H1 (cell line): ENCODE measurements at regions of chr16 and their contacts with region 1.

Region 1: GRCh38 chr16:4957720-4958509 is at the start of gene SEC14L5:
- DNase-seq: peak; percentile 99 to 100
- H3K4me3 ChIP-seq: peak within 1 kb of the TSS; percentile 42 to 76 (median 61)
- H3K27ac ChIP-seq: no peak within 1 kb of the TSS
- H3K4me1 ChIP-seq: peaks cover 0 to 10% (median 9%) of the 10 kb centered on the region in 4 experiments; a peak in 6 of 7 replicates
- H3K27me3 ChIP-seq: no peaks in the 10 kb centered on the region; a peak in 2 of 7 replicates
- CTCF ChIP-seq: no peak
- EP300 ChIP-seq: no peak
- POLR2A ChIP-seq: no peak
- RAD21 ChIP-seq: peak in 1 of 2 experiments; percentile 16; a peak in 1 of 4 replicates
- total RNA-seq, gene SEC14L5: 3.0 and 3.2 TPM in 2 replicates

Region 2: DNA sequence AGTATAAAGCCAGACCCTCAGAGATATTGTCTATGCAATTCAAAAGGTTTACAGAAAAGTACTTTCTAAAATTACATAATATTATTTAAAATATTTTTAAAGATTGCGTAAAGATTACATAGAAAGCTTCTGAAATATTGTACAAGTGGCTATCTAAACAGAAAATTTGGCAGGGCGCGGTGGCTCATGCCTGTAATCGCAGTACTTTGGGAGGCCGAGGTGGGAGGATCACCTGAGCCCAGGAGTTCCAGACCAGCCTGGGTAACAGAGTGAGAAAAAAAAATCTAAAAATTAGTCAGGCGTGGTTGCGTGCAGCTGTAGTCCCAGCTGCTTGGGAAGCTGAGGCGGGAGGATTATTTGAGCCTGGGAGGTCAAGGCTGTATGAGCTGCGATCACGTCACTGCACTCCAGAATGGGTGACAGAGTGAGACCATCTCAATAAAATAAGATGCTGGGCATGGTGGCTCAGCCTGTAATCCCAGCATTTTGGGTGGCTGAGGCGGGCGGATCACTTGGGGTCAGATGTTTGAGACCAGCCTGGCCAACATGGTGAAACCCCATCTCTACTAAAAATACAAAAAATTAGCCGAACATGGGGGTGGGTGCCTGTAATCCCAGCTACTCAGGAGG is 92.6 kb before region 1 on chr16:
- CTCF ChIA-PET with region 1: interaction called, 11 read pairs
- POLR2A ChIA-PET with region 1: no interaction called
- DNase-seq: no peak
- H3K4me3 ChIP-seq: no peak overlapping the region
- H3K27ac ChIP-seq: no peak overlapping the region
- H3K4me1 ChIP-seq: no peaks in the 10 kb centered on the region
- H3K27me3 ChIP-seq: no peaks in the 10 kb centered on the region
- CTCF ChIP-seq: no peak
- EP300 ChIP-seq: no peak
- POLR2A ChIP-seq: no peak
- RAD21 ChIP-seq: no peak

Region 3: GRCh38 chr16:4882633-4883285 is 75.2 kb before region 1 on chr16:
- CTCF ChIA-PET with region 1: interaction called, 10 read pairs
- POLR2A ChIA-PET with region 1: interaction called, 9 read pairs
- DNase-seq: no peak
- H3K4me3 ChIP-seq: no peak overlapping the region
- H3K27ac ChIP-seq: no peak overlapping the region
- H3K4me1 ChIP-seq: no peaks in the 10 kb centered on the region
- H3K27me3 ChIP-seq: no peaks in the 10 kb centered on the region
- CTCF ChIP-seq: no peak
- EP300 ChIP-seq: no peak
- POLR2A ChIP-seq: no peak
- RAD21 ChIP-seq: no peak

Region 4: GRCh38 chr16:4931381-4931780 is 26.5 kb before region 1 on chr16:
- CTCF ChIA-PET with region 1: interaction called, 30 read pairs
- POLR2A ChIA-PET with region 1: interaction called, 18 read pairs
- DNase-seq: no peak
- H3K4me3 ChIP-seq: no peak overlapping the region
- H3K27ac ChIP-seq: no peak overlapping the region
- H3K4me1 ChIP-seq: peaks cover 0 to 6% (median 3%) of the 10 kb centered on the region in 4 experiments; a peak in 4 of 7 replicates
- H3K27me3 ChIP-seq: no peaks in the 10 kb centered on the region
- CTCF ChIP-seq: no peak
- EP300 ChIP-seq: no peak
- POLR2A ChIP-seq: no peak
- RAD21 ChIP-seq: no peak

Region 5: GRCh38 chr16:5025171-5025632 is 67.3 kb after region 1 on chr16:
- CTCF ChIA-PET with region 1: interaction called, 30 read pairs
- POLR2A ChIA-PET with region 1: interaction called, 8 read pairs
- DNase-seq: peak; percentile 39 to 86
- H3K4me3 ChIP-seq: no peak overlapping the region
- H3K27ac ChIP-seq: no peak overlapping the region
- H3K4me1 ChIP-seq: peaks cover 0 to 4% (median 1%) of the 10 kb centered on the region in 4 experiments; a peak in 3 of 7 replicates
- H3K27me3 ChIP-seq: no peaks in the 10 kb centered on the region
- CTCF ChIP-seq: peak; percentile 71 to 86 (median 80)
- EP300 ChIP-seq: no peak
- POLR2A ChIP-seq: no peak
- RAD21 ChIP-seq: peak; percentile 63 to 73

Region 6: DNA sequence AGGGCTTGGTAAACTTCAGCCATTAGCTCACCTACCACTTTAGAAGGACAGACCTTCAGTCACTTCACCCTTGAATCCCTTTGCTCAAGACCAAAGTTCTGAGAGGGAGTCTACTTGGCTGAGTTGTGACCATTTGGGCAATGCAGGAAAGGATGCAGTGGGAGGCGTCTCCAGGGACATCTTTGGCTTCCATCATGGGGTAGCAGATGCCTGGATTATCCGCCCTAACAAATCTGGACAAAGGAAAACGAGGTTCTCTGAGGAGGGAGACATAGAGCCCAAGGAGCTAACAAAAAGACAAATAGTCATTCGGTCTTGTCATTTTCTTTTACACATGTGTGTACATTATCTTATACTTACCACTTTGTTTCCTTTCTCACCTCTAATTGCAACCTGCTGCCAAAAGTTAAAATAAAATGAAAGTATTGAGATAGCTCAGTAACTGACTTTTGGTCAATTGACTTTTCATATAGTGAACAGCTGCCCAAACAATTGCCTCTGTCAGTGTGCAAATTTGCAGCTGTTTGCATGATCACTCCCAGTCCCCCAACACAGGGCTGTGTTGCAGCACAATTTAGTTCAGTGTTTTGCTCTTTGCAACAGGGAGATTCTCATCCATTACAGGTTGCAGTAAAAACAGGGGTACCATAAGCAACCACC is 248.5 kb after region 1 on chr16:
- CTCF ChIA-PET with region 1: no interaction called
- POLR2A ChIA-PET with region 1: no interaction called
- DNase-seq: no peak
- H3K4me3 ChIP-seq: no peak overlapping the region
- H3K27ac ChIP-seq: no peak overlapping the region
- H3K4me1 ChIP-seq: no peaks in the 10 kb centered on the region
- H3K27me3 ChIP-seq: no peaks in the 10 kb centered on the region; a peak in 1 of 7 replicates
- CTCF ChIP-seq: no peak
- EP300 ChIP-seq: no peak
- POLR2A ChIP-seq: no peak
- RAD21 ChIP-seq: no peak